ENCODE measurements at regions of chr10 and their contacts with region 1.

Region 1: GRCh38 chr10:14648005-14648765 is 126.5 kb downstream of the FAM107B start:
- DNase-seq: peak; percentile 99
- ATAC-seq: peak; percentile 93
- H3K4me3 ChIP-seq: peak overlapping the region; percentile 59; the same call in 1 of the 2 replicates
- H3K27ac ChIP-seq: peak overlapping the region; percentile 74
- H3K4me1 ChIP-seq: peaks cover 39% of the 10 kb centered on the region
- H3K27me3 ChIP-seq: no peaks in the 10 kb centered on the region
- CTCF ChIP-seq: no peak
- EP300 ChIP-seq: peak; percentile 97 to 98
- POLR2A ChIP-seq: no peak
- RAD21 ChIP-seq: peak; percentile 37

Region 2: DNA sequence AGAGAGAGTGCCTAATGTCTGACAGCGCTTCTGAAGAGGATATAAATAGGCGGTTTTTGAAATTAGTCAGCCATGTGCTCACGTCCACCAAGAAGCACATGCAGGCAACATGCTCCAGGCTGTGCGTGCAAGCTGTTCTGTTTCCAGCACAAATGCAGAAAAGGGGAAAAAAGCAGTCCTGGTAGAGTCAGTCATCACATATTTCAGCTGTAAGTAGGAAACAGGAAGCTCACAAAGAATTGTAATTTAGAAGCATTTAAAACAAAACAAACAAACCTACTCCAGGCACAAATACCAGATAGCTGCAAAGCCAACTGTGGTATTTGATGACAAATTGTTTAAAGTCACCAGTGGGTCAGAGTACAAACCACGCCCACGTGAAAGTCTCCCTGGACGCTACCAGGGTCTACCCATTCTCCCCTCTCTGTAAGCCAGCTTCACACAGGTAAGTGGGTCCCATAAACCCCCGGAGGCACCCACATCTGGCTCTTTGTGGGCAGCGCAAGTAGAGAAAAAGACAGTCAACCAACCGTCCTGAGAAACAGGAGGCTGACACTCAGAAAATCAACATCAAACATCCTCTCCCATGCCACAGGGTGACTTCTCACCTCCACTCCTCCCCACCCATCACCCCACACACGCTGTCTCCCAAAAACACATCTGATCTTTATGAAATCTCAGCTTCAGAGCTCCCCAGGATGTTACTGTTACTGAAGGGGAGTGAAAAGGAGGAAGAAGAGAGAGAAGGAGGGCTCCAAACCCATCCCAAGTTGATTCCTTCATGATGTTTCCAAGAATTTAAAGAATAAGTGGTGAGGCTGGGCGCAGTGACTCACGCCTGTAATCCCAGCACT is 59.9 kb before region 1 on chr10:
- CTCF ChIA-PET with region 1: no interaction called
- POLR2A ChIA-PET with region 1: interaction called, 4 read pairs
- RAD21 ChIA-PET with region 1: interaction called, 6 read pairs
- SMC1A ChIA-PET with region 1: interaction called, 8 read pairs
- in situ Hi-C with region 1: no loop called
- intact Hi-C with region 1: loop called (anchors 5 kb)
- DNase-seq: no peak
- ATAC-seq: peak; percentile 72
- H3K4me3 ChIP-seq: no peak overlapping the region
- H3K27ac ChIP-seq: peak overlapping the region; percentile 64
- H3K4me1 ChIP-seq: peaks cover 56% of the 10 kb centered on the region
- H3K27me3 ChIP-seq: no peaks in the 10 kb centered on the region
- CTCF ChIP-seq: no peak
- EP300 ChIP-seq: peak; percentile 23 to 80; a peak in 3 of 4 replicates
- POLR2A ChIP-seq: no peak
- RAD21 ChIP-seq: no peak

Region 3: GRCh38 chr10:14611968-14612693 is 36.1 kb before region 1 on chr10:
- CTCF ChIA-PET with region 1: interaction called, 11 read pairs
- POLR2A ChIA-PET with region 1: interaction called, 99 read pairs
- RAD21 ChIA-PET with region 1: interaction called, 17 read pairs
- SMC1A ChIA-PET with region 1: interaction called, 45 read pairs
- in situ Hi-C with region 1: loop called (anchors 5 kb)
- intact Hi-C with region 1: no loop called
- DNase-seq: no peak
- ATAC-seq: peak; percentile 63
- H3K4me3 ChIP-seq: no peak overlapping the region
- H3K27ac ChIP-seq: no peak overlapping the region
- H3K4me1 ChIP-seq: peaks cover 14% of the 10 kb centered on the region
- H3K27me3 ChIP-seq: no peaks in the 10 kb centered on the region
- CTCF ChIP-seq: no peak
- EP300 ChIP-seq: no peak
- POLR2A ChIP-seq: no peak
- RAD21 ChIP-seq: no peak

Region 4: DNA sequence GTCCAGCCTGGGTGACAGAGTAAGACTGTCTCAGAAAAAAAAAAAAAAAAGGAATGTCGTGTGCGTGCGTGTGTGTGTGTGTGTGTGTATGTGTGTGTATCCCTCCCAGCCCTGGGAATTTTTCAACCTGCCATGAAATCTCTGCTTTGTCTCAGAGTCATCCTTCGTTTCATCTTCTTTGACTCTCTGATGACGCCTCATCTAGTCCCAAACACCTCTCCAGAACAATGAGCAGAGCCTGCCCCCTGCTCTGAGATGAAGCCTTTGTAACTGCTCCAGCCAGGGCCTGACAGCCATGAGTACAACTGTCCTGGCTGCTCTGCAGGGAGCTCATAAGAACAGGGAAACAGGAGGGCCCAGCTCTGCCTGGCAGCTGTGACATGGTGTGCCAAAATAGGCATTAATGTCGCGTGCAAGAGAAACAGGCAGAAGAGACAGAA is 23.0 kb before region 1 on chr10:
- CTCF ChIA-PET with region 1: interaction called, 3 read pairs
- POLR2A ChIA-PET with region 1: interaction called, 5 read pairs
- RAD21 ChIA-PET with region 1: no interaction called
- SMC1A ChIA-PET with region 1: interaction called, 12 read pairs
- in situ Hi-C with region 1: no loop called
- intact Hi-C with region 1: no loop called
- DNase-seq: no peak
- ATAC-seq: no peak
- H3K4me3 ChIP-seq: no peak overlapping the region
- H3K27ac ChIP-seq: no peak overlapping the region
- H3K4me1 ChIP-seq: no peaks in the 10 kb centered on the region
- H3K27me3 ChIP-seq: no peaks in the 10 kb centered on the region
- CTCF ChIP-seq: no peak
- EP300 ChIP-seq: no peak
- POLR2A ChIP-seq: no peak
- RAD21 ChIP-seq: no peak

Region 5: GRCh38 chr10:14742815-14743214 is 94.6 kb after region 1 on chr10:
- CTCF ChIA-PET with region 1: no interaction called
- POLR2A ChIA-PET with region 1: interaction called, 5 read pairs
- RAD21 ChIA-PET with region 1: interaction called, 9 read pairs
- SMC1A ChIA-PET with region 1: interaction called, 9 read pairs
- in situ Hi-C with region 1: no loop called
- intact Hi-C with region 1: loop called (anchors 2 kb)
- DNase-seq: peak; percentile 76
- ATAC-seq: peak; percentile 92
- H3K4me3 ChIP-seq: no peak overlapping the region
- H3K27ac ChIP-seq: peak overlapping the region; percentile 69
- H3K4me1 ChIP-seq: peaks cover 32% of the 10 kb centered on the region
- H3K27me3 ChIP-seq: no peaks in the 10 kb centered on the region
- CTCF ChIP-seq: no peak
- EP300 ChIP-seq: peak; percentile 90 to 98; a peak in 3 of 4 replicates
- POLR2A ChIP-seq: no peak
- RAD21 ChIP-seq: no peak